Adrenal gland (tissue), 19 donors: ENCODE measurements at regions of chr19 and their contacts with region 1.

Region 1: GRCh38 chr19:41426952-41427646 is at the start of gene B3GNT8:
- DNase-seq: peak; percentile 74 to 91 (median 85)
- H3K4me3 ChIP-seq: peak within 1 kb of the TSS in 2 of 4 donors; percentile 4 to 38
- H3K27ac ChIP-seq: peak within 1 kb of the TSS in 4 of 5 donors; percentile 6 to 61 (median 30)
- H3K4me1 ChIP-seq: peaks cover 15 to 32% of the 10 kb centered on the region in 2 donors
- H3K27me3 ChIP-seq: no peaks in the 10 kb centered on the region
- CTCF ChIP-seq: no peak
- POLR2A ChIP-seq: peak in 1 of 2 donors; percentile 57
- total RNA-seq, gene B3GNT8: 0.30 to 6.5 (median 2.0) TPM

Region 2: GRCh38 chr19:41373993-41374392 is 53.1 kb before region 1 on chr19:
- intact Hi-C with region 1: loop called in 1 of 2 experiments (anchors 10 kb)
- DNase-seq: peak; percentile 76 to 94 (median 89)
- H3K4me3 ChIP-seq: no peak overlapping the region
- H3K27ac ChIP-seq: peak overlapping the region in 2 of 5 donors; percentile 37 to 43
- H3K4me1 ChIP-seq: peaks cover 10 to 23% of the 10 kb centered on the region in 2 donors
- H3K27me3 ChIP-seq: no peaks in the 10 kb centered on the region
- CTCF ChIP-seq: no peak
- POLR2A ChIP-seq: no peak

Region 3: DNA sequence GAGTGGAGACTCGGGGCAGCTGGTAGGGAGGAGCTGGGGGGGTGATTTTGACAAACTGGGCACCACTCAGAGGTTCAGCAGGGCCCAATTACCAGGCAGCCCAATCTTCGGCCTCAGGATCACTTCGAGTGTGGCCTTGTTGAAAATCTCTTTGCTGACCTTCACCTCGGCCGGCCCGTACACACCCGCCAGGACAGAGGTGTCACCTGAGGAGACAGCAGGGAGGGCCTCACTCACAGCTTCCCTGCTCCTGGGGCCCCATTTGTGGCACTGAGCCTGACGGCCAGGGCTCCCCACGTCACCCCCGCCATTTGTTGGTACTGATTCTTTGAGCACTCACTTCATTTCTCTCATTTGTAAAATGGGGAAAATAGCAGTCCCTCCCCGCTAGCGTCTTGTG is 34.3 kb before region 1 on chr19:
- intact Hi-C with region 1: loop called in 1 of 2 experiments (anchors 5 kb)
- DNase-seq: peak in 3 of 7 donors; percentile 24 to 58 (median 39)
- H3K4me3 ChIP-seq: no peak overlapping the region
- H3K27ac ChIP-seq: no peak overlapping the region
- H3K4me1 ChIP-seq: peaks cover 10% of the 10 kb centered on the region in 2 donors
- H3K27me3 ChIP-seq: no peaks in the 10 kb centered on the region
- CTCF ChIP-seq: no peak
- POLR2A ChIP-seq: no peak